AG04450 (cell line): ENCODE measurements at regions of chr17 and their contacts with region 1.

Region 1: GRCh38 chr17:34199932-34200534 is 55.1 kb upstream of the CCL2 start:
- DNase-seq: peak; percentile 80
- H3K4me3 ChIP-seq: no peak overlapping the region
- H3K27ac ChIP-seq: no peak overlapping the region
- H3K27me3 ChIP-seq: peaks cover 3% of the 10 kb centered on the region
- CTCF ChIP-seq: peak; percentile 100

Region 2: GRCh38 chr17:34091975-34092374 is 108.1 kb before region 1 on chr17:
- CTCF ChIA-PET with region 1: no interaction called
- POLR2A ChIA-PET with region 1: no interaction called
- DNase-seq: no peak
- H3K4me3 ChIP-seq: no peak overlapping the region
- H3K27ac ChIP-seq: no peak overlapping the region
- H3K27me3 ChIP-seq: no peaks in the 10 kb centered on the region
- CTCF ChIP-seq: no peak

Region 3: GRCh38 chr17:34171245-34171818 is 28.7 kb before region 1 on chr17:
- CTCF ChIA-PET with region 1: interaction called, 13 read pairs
- POLR2A ChIA-PET with region 1: no interaction called
- DNase-seq: no peak
- H3K4me3 ChIP-seq: no peak overlapping the region
- H3K27ac ChIP-seq: no peak overlapping the region
- H3K27me3 ChIP-seq: no peaks in the 10 kb centered on the region
- CTCF ChIP-seq: peak; percentile 81

Region 4: GRCh38 chr17:34235389-34236028 is 35.5 kb after region 1 on chr17:
- CTCF ChIA-PET with region 1: interaction called, 18 read pairs
- POLR2A ChIA-PET with region 1: no interaction called
- DNase-seq: no peak
- H3K4me3 ChIP-seq: no peak overlapping the region
- H3K27ac ChIP-seq: no peak overlapping the region
- H3K27me3 ChIP-seq: no peaks in the 10 kb centered on the region
- CTCF ChIP-seq: no peak

Region 5: DNA sequence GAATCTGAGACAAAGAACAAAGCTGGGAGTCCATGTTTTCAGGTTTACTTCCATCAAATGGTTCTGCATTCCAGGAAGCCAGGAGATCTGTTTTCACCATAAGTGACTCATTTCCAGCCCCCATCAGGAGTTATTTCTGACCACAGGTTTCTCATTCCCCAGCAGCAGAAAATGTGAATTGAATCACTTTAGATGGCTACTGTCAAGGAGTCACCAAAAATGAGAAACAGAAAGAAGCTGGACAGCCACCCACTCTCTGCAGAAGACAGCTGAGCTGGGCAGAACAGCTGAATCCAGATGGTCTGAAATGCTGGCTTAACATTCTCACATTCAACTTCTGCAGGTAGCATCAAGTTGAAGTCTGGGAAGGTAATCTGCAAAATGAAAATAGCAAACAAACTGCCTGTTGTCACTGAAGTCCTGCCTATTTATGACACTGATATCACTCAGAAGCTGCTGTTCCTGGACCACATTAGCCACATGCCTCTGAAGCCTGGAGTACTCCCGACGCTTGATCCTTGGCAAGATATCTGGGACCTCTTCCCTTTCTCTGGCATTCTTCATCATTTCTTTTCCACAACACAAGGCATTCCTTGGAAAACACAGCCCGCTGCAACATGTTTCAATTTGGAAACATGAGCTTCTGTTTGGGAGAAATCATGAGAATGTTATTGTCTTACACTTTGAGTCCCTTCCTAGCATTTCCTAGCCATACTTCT is 100.8 kb after region 1 on chr17:
- CTCF ChIA-PET with region 1: interaction called, 53 read pairs
- POLR2A ChIA-PET with region 1: no interaction called
- DNase-seq: no peak
- H3K4me3 ChIP-seq: no peak overlapping the region
- H3K27ac ChIP-seq: peak overlapping the region; percentile 88
- H3K27me3 ChIP-seq: no peaks in the 10 kb centered on the region
- CTCF ChIP-seq: no peak

Region 6: DNA sequence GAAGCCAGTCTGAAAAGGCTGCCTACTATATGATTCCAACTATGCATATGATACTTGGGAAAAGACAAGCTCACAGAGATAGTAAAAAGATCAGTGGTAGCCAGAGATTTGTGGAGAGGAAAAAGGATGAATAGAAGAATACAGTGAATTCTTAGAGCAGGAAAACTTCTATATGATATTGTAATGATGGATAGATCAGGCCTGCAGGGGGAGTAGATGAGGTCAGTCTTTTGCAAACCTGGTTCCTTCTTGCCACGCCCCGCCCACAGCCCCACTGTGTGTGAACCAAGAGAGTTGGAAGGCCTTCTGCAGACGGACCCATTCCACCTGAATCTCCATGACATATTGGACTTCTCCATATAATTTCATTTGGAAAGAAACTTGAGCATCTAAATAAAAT is 118.4 kb after region 1 on chr17:
- CTCF ChIA-PET with region 1: interaction called, 13 read pairs
- POLR2A ChIA-PET with region 1: no interaction called
- DNase-seq: no peak
- H3K4me3 ChIP-seq: no peak overlapping the region
- H3K27ac ChIP-seq: no peak overlapping the region
- H3K27me3 ChIP-seq: no peaks in the 10 kb centered on the region
- CTCF ChIP-seq: 0 out of 2 replicates have a peak, but pooled peaks have one; percentile 3